Right ventricle myocardium inferior (tissue), 1 donor: ENCODE measurements at regions of chr2 and their contacts with region 1.

Region 1: DNA sequence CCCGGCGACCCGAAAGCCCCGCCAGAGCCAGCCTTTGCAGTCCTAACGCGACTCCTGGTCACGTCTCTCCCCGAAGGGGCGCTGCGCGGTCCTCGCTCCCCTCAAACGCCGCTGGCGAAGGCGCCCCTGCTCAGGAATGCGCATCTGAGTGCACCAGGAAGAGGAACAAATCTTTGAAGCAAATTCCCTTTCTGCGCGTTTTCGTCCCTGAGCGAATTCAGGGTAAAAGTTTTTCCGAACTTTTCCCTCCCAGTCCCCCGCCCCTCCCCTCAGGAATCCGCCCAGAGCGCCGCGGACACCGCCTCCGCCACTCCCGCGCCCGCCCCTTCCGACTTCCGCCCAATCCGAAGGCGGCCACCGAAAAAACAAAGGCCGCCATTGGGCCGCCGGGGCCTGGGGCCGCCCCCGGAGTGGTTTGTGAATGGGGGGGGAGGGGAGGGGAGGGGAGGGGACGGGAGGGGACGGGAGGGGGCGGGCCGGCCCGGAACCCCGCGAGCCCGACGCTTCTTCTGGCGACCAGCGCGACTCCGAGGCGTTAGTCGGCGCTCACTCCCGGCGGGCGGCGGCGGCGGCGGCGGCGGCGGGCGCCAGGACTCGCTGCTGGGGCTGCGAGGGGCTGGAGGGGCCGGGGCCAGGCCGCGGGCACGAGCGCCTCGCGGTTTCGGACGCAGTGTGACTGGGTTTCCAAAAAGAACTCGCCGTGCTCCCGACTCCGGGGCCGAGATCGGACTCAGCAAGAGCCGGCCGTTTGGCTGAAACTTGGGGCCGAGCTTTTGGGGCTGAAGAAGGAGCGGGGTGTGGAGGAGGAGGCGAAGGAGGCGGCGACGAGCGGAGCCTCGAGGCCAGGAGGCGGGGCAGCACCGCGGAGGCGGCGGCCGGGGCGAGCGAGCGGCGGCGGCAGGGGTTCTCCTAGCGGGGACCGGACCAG is at the start of gene FZD7:
- DNase-seq: peak; percentile 95
- ATAC-seq: peak; percentile 90
- total RNA-seq, gene FZD7: 24.2 TPM

Region 2: DNA sequence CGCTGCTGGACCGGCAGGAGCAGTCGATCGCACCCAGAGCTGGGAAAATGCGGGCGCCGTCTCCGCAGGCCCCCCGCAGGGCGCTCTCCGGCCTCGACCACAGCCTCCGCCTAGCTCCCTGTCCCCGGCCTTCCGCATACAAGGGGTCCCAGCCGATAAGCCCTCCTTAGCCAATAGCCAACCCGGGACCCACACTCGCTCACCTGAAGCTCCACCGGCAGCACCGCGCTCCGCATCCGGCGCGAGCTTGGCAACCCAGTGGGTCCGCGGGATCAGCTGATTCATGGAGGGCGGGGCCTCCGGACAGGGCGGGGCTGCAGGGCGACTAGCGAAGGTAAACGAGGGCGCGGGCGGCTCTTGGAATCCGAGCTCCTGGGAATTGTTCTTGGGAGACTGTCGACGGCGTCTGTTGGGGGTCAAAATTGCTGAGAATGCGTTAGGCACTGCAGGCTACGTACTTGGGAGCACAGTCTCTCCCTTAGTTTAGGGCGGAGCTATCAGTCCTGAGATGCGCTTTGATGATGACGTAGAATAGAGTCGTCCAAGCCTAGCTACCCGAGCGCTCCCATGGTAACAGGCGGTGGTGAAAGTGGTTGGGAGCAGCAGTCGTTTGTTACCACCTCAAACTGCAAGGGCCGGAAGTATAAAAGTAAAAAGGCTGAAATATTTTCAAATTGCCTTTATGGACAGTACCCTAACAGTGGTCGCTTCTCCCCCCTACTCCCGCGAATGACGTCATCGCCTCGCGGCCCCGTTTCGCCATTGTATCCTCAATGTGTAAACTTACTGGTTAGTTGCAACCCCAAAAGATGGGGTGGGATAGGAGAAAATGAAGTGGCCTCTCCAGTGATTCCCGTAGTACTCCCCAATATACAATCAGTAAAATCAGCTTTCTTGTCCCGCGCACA is 252.7 kb before region 1 on chr2 and contains the start of gene ALS2:
- intact Hi-C with region 1: loop called (anchors 5 kb)
- DNase-seq: peak; percentile 98
- ATAC-seq: peak; percentile 97
- total RNA-seq, gene ALS2: 34.5 TPM

Region 3: GRCh38 chr2:201860636-201861066 is 172.9 kb before region 1 on chr2:
- intact Hi-C with region 1: loop called (anchors 2 kb)
- DNase-seq: no peak
- ATAC-seq: peak; percentile 84

Region 4: DNA sequence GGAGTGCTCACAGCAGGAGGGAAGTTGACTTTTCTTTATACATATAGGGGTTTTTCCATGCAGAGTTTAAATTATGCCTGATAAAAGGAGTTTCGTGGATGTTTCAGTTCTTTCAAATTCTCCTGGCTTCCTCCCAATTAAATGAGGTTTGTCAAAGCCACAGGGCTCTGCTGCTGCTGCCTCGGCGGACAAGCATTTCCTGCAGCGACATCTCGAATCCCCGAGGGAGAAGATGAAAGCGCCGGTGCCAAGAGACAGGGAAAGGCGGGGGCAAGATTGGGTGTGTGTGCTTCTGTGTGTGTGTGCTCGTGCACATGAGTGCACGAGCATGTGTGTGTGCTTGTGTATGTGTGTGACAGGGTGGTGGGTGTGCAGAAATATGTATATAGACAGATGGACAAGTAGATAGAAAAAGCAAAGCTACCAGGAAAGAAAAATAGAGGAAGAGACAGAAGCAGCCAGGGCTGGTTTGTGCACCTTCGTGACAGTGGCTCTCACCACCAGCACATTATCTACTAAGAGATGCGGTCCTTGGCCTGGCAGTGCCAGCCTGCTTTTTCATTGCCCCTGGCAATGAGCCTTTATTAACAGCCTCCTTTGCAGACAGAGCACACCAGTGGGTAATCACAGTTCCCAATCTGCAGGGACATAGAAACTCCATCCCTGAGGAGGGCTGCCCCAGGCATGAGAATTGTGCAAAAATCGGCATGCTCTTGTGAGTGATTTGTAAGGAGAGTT is 151.1 kb before region 1 on chr2:
- intact Hi-C with region 1: loop called (anchors 10 kb)
- DNase-seq: no peak
- ATAC-seq: no peak

Region 5: DNA sequence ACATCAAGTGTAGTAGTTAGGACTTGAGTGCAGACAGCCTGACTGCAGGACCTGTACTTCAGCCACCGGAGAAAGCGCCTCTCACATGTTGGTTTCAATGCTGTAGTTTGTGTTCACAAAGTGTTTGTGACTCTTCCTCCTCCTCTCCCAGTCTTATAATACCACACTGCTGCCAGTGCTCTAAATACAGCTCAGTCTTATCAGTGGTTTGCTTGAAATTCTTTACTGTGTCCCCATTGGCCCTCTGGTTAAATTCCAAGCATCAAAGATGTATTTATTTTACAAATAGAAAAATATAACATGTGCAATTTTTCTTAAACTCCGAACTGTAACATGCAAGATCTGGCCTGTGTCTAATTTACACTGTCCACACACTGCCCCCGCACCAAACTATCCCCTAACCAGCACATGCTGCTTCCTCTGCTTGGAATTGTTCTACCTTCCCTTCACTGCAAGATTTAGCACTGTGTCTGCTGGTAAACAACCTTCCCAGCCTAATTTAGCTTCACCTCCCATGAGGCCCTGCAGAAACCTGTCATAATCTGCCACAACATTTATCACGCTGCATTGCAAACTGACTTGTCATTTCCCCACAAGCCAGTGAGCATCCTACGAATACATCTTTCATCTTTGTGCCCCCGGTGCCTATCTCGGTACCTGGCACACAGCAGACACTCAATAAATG is 127.7 kb after region 1 on chr2:
- intact Hi-C with region 1: loop called (anchors 5 kb)
- DNase-seq: no peak
- ATAC-seq: peak; percentile 75

Region 6: GRCh38 chr2:202317080-202317857 is 283.7 kb after region 1 on chr2:
- intact Hi-C with region 1: no loop called
- DNase-seq: no peak
- ATAC-seq: peak; percentile 81